ENCODE measurements at regions of chr22 and their contacts with region 1.

Region 1: DNA sequence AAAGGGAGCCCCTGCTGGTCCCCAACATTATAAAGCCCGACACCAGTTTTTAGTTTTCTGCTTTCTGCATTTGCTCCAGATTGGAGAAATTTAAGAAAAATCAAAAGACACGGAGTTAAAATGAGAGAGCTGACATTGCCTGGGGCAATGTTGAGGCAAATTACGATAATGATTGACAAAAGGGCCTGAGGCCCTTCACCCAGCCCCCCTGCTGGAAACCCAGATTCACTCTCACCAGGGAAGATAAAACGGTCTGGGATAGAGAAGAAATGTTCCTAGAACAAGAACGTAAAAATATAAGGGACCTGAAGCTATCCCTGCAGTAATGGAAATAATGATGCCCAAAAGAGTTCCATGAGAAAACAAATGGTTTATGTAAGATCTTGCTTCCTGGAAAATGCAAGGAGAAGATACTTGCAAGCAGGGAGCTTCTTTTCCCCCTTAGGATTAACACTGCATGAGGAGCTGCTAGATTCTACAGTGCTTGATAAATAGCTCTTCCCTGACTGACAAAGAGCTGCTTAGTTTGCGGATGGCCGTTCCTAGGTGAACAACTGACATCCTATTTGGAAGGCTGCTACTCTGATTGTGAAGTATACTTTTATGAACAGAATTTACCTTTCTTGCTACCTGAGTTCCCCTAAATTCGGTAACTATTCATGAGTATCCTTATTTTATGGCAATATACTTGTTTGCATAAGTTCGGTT is 40.6 kb upstream of the GNAZ start:
- DNase-seq: no peak
- ATAC-seq: no peak

Region 2: GRCh38 chr22:22913989-22914388 is 115.7 kb before region 1 on chr22:
- intact Hi-C with region 1: loop called (anchors 10 kb)
- DNase-seq: no peak
- ATAC-seq: no peak

Region 3: GRCh38 chr22:22955866-22956535 is 73.7 kb before region 1 on chr22:
- intact Hi-C with region 1: no loop called
- DNase-seq: peak; percentile 59
- ATAC-seq: peak; percentile 88